ENCODE measurements at regions of chr5 and their contacts with region 1.

Region 1: DNA sequence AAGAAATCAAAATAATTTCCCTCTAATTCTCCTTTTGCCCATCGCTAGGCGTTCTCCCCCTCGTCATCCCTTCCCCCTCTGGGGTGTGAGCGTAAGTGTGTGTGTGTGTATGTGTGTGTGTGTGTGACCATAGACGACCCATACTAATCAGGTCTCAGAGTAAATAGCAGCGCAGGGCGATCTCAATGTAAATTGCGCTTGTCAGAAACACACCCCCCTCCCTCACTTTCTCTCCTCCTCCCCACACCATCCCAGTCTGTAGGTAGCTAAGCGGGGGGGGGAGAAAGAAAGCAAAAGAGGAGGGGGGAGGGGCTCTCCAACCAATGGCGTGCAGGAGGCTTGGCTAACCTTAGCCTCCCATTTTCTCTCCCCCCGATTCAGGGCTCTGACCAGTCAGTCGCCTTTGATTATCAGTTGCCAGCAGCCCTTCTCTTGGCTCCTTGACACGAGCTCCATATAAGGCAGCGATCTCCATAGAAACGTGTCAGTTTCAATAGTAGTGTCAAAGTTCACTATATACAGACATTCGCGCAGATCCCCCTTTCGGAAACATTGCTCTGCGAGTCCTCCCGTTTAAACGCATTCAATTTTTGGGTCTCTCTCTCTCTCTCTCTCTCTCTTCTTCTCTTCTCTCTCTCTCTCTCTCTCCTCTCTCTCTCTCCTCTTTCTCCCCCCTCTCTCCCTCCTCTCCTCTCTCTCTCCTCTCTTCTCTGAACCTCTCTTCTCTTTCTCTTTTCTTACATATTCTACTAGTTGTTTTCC is at the start of gene NR2F1:
- DNase-seq: peak; percentile 52
- ATAC-seq: peak; percentile 34 to 52
- H3K4me3 ChIP-seq: peak within 1 kb of the TSS; percentile 59
- H3K27ac ChIP-seq: peak within 1 kb of the TSS; percentile 80
- H3K4me1 ChIP-seq: peaks cover 41% of the 10 kb centered on the region
- H3K27me3 ChIP-seq: peaks cover 77% of the 10 kb centered on the region
- CTCF ChIP-seq: no peak
- total RNA-seq, gene NR2F1: 42.6 TPM

Region 2: GRCh38 chr5:93299681-93300308 is 283.1 kb before region 1 on chr5:
- intact Hi-C with region 1: no loop called
- DNase-seq: no peak
- ATAC-seq: no peak
- H3K4me3 ChIP-seq: no peak overlapping the region
- H3K27ac ChIP-seq: no peak overlapping the region
- H3K4me1 ChIP-seq: no peaks in the 10 kb centered on the region
- H3K27me3 ChIP-seq: no peaks in the 10 kb centered on the region
- CTCF ChIP-seq: no peak

Region 3: GRCh38 chr5:93359296-93359958 is 223.4 kb before region 1 on chr5:
- intact Hi-C with region 1: no loop called
- DNase-seq: no peak
- ATAC-seq: peak; percentile 34 to 40
- H3K4me3 ChIP-seq: no peak overlapping the region
- H3K27ac ChIP-seq: no peak overlapping the region
- H3K4me1 ChIP-seq: peaks cover 8% of the 10 kb centered on the region
- H3K27me3 ChIP-seq: no peaks in the 10 kb centered on the region
- CTCF ChIP-seq: no peak

Region 4: GRCh38 chr5:93915142-93915553 is 332.3 kb after region 1 on chr5:
- intact Hi-C with region 1: loop called (anchors 10 kb)
- DNase-seq: no peak
- ATAC-seq: peak in 1 of 2 donors; percentile 42
- H3K4me3 ChIP-seq: no peak overlapping the region
- H3K27ac ChIP-seq: no peak overlapping the region
- H3K4me1 ChIP-seq: no peaks in the 10 kb centered on the region
- H3K27me3 ChIP-seq: no peaks in the 10 kb centered on the region
- CTCF ChIP-seq: peak; percentile 51

Measured in lower lobe of right lung (tissue), 2 donors.